ENCODE measurements at regions of chr14 and their contacts with region 1.

Region 1: GRCh38 chr14:73058224-73058921 is at the start of gene RBM25:
- DNase-seq: peak; percentile 97
- H3K4me3 Mint-ChIP-seq: no peak within 1 kb of the TSS
- H3K27ac Mint-ChIP-seq: no peak within 1 kb of the TSS
- H3K4me1 Mint-ChIP-seq: peaks cover 34% of the 10 kb centered on the region
- H3K27me3 Mint-ChIP-seq: no peaks in the 10 kb centered on the region
- total RNA-seq, gene RBM25: 89.6 to 97.9 TPM

Region 2: GRCh38 chr14:73014105-73014504 is 44.3 kb before region 1 on chr14:
- CTCF ChIA-PET with region 1: no interaction called
- POLR2A ChIA-PET with region 1: interaction called, 6 read pairs
- intact Hi-C with region 1: loop called (anchors 5 kb)
- DNase-seq: no peak
- H3K4me3 Mint-ChIP-seq: no peak overlapping the region
- H3K27ac Mint-ChIP-seq: peak overlapping the region; percentile 9
- H3K4me1 Mint-ChIP-seq: peaks cover 27% of the 10 kb centered on the region
- H3K27me3 Mint-ChIP-seq: no peaks in the 10 kb centered on the region

Region 3: GRCh38 chr14:73136387-73137225 is 78.2 kb after region 1 on chr14 and contains the start of gene PSEN1:
- CTCF ChIA-PET with region 1: no interaction called
- POLR2A ChIA-PET with region 1: interaction called, 15 read pairs
- intact Hi-C with region 1: loop called (anchors 1 kb)
- DNase-seq: peak; percentile 98
- H3K4me3 Mint-ChIP-seq: peak within 1 kb of the TSS; percentile 93
- H3K27ac Mint-ChIP-seq: peak within 1 kb of the TSS; percentile 97
- H3K4me1 Mint-ChIP-seq: peaks cover 25% of the 10 kb centered on the region
- H3K27me3 Mint-ChIP-seq: no peaks in the 10 kb centered on the region
- total RNA-seq, gene PSEN1: 30.3 to 31.6 TPM

Region 4: GRCh38 chr14:73491256-73492042 is 433.1 kb after region 1 on chr14:
- CTCF ChIA-PET with region 1: no interaction called
- POLR2A ChIA-PET with region 1: interaction called, 4 read pairs
- intact Hi-C with region 1: loop called (anchors 1 kb)
- DNase-seq: peak; percentile 85
- H3K4me3 Mint-ChIP-seq: peak overlapping the region; percentile 77
- H3K27ac Mint-ChIP-seq: peak overlapping the region; percentile 74
- H3K4me1 Mint-ChIP-seq: peaks cover 43% of the 10 kb centered on the region
- H3K27me3 Mint-ChIP-seq: no peaks in the 10 kb centered on the region

Measured in activated CD4-positive, alpha-beta memory T cell treated with anti-CD3 and anti-CD28 coated beads for 36 hours (primary cell).